ENCODE measurements at regions of chr2 and their contacts with region 1.

Region 1: DNA sequence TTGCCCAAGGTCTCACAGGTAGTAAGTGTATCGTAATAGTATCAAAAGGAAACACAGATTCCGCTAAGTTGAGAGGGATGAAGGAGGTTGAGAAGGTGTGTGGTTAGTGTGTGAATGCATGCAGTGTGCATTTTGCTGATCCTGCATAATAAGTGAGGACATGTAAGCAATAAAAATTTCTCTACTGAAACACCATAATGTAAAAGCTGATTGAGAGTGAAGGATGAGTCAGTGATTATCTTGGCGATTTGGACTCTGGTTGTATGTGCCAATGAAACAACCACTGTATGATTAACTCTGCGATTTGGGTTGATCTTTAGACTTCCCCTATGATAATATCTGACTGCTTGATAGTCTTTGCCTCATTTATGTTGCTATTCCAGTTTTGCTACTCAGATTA is 16.7 kb upstream of the ADGRF3 start:
- DNase-seq: no peak
- H3K4me3 Mint-ChIP-seq: no peak overlapping the region
- H3K27ac Mint-ChIP-seq: no peak overlapping the region
- H3K4me1 Mint-ChIP-seq: peaks cover 33% of the 10 kb centered on the region
- H3K27me3 Mint-ChIP-seq: no peaks in the 10 kb centered on the region
- CTCF ChIP-seq: no peak

Region 2: DNA sequence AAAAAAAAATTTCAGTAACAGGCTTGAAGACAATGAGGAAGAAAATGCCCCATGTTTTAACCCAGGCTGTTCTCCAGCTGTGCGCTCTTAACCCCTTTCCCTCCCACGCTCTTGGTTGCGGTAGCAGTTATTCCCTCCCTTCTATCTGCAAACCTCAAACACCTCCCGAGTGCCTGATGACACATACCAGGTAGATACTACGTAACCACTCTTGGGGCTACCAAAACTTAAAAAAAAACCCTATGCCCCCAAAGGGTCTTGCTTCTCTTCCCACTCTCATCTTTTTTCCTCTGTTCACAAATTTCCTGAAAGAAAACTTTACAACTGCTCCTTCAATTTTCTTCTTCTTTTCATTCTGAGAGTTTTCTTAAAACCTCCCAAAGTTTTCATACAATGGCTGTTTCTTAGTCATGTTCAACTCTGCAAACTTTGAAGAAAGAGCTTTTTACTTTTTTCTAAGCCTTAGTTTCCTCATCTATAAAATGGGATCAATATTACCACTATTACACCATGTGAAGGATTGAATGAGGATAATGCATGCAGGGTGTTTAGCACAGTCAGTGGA is 33.5 kb after region 1 on chr2:
- CTCF ChIA-PET with region 1: no interaction called
- intact Hi-C with region 1: loop called (anchors 5 kb)
- DNase-seq: no peak
- H3K4me3 Mint-ChIP-seq: no peak overlapping the region
- H3K27ac Mint-ChIP-seq: no peak overlapping the region
- H3K4me1 Mint-ChIP-seq: no peaks in the 10 kb centered on the region
- H3K27me3 Mint-ChIP-seq: no peaks in the 10 kb centered on the region
- CTCF ChIP-seq: no peak